ENCODE measurements at regions of chrX and their contacts with region 1.

Region 1: GRCh38 chrX:136694431-136695087 is 46.6 kb downstream of the CD40LG start:
- DNase-seq: peak; percentile 36
- ATAC-seq: peak; percentile 71
- H3K4me3 Mint-ChIP-seq: peak overlapping the region; percentile 68
- H3K27ac Mint-ChIP-seq: peak overlapping the region; percentile 98
- H3K4me1 Mint-ChIP-seq: peaks cover 75% of the 10 kb centered on the region
- H3K27me3 Mint-ChIP-seq: no peaks in the 10 kb centered on the region

Region 2: DNA sequence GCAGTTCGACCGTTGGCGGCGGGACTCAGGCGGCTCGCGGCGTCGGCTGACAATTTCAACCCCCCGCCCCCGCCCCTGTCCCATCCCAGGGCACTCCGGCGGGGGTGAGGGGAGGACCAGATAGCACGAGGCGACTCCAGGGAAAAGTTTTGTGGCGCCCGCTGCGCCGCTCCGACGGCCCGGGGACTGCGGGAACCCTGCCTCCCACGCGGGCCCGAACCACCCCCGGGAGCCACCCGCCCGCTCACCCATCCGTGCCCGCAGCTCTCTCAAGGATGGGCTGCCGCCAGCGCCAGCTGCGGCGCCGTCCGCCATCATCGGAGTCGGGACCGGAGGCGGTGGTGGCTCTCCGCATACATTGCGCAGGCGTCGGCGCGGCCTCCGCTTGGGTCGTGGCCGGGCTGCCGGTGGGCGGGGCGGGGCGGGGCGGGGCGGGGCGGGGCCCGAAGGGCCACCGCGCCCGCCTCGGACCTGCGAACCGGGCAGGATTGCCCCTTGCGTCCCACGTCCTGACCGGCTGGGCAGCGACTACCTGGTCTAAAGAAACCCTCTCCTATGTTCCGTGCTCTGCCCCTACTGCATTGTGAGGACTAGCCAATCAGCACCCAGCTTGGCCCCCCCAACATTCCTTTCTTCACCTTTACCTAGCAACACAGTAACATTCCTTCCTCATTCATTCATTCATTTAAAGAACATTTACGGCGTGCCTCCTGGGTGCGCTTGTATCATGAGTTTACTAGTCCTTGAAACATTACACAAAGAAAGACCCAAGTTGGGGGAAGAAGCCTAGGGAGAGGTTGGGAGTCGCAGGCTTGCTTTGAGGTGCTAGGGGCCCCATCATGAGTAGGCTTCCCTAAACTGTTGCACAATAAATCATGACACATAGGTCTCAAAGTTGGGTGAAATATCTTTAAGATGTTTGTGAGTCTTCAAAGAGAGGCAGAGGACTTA is 443.2 kb before region 1 on chrX and contains the start of gene MAP7D3:
- CTCF ChIA-PET with region 1: interaction called, 4 read pairs
- POLR2A ChIA-PET with region 1: no interaction called
- intact Hi-C with region 1: loop called in 1 of 2 experiments (anchors 10 kb)
- DNase-seq: peak; percentile 80
- ATAC-seq: peak; percentile 91
- H3K4me3 Mint-ChIP-seq: peak within 1 kb of the TSS; percentile 81
- H3K27ac Mint-ChIP-seq: peak within 1 kb of the TSS; percentile 80
- H3K4me1 Mint-ChIP-seq: peaks cover 8% of the 10 kb centered on the region
- H3K27me3 Mint-ChIP-seq: no peaks in the 10 kb centered on the region
- total RNA-seq, gene MAP7D3: 16.8 to 22.7 TPM

Region 3: DNA sequence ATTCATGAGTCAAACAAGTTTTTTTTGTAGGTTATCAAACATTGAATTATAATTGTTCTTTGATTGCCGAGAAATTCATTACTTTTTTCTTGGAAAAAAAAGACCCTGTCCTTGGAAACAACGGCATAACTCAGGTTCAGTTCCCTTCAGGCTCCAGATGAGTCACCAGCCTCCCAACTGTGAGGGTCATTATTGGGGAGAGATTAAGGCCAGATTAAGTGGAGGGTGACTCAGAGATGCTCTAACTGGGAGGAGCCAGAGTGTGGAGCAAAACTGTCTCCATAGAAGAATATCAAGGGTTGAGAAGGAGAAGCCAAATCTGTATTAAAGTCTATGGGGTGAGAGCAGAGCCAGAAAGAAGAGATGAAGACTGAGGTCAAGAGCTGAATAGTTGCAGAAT is 384.1 kb before region 1 on chrX:
- CTCF ChIA-PET with region 1: no interaction called
- POLR2A ChIA-PET with region 1: no interaction called
- intact Hi-C with region 1: no loop called
- DNase-seq: no peak
- ATAC-seq: no peak
- H3K4me3 Mint-ChIP-seq: no peak overlapping the region
- H3K27ac Mint-ChIP-seq: no peak overlapping the region
- H3K4me1 Mint-ChIP-seq: no peaks in the 10 kb centered on the region
- H3K27me3 Mint-ChIP-seq: peaks cover 3% of the 10 kb centered on the region

Region 4: DNA sequence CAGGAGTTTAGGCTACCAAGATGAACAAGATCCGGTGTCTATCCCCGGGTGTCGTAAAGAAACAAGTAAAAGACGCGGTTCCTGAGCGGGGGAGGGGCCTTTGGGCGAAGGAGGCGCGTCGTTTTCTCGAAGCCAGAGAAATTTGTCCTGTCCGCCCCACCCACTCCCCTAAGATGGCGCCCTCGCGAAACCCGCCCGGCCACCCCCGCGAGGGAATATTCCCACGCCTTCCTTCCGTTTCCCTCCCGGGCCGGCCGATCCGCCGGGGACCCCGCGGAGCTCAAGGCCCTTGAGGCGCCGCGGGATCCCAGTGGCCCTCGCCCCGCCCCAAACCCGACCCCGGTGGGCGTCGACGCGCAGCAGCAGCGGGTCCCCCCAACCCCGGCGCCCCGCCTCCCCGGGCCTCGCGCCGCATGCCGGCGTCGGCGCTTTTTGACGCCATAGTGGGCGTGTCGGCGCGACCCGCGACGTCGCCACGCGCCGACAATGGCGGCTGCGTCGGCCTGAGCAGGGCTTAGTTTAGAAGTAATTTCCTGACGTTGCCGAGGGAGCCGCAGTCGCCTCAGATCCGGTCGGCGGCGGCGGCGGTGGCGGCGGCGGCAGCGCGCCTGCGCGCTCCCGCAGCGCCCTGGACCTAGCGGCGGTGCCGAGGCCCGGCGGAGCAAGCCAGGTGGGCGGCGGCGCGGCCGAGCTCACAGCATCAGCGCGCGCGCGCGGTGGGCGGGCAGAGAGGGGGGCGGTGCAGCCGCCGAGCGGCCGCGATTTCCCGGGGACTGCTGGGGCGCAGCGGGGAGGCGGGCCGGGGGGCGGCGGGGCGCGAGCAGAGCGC is 197.6 kb before region 1 on chrX and contains the start of gene HTATSF1:
- CTCF ChIA-PET with region 1: no interaction called
- POLR2A ChIA-PET with region 1: no interaction called
- intact Hi-C with region 1: loop called (anchors 1 to 5 kb)
- DNase-seq: peak; percentile 92
- ATAC-seq: peak; percentile 76
- H3K4me3 Mint-ChIP-seq: peak within 1 kb of the TSS; percentile 83
- H3K27ac Mint-ChIP-seq: peak within 1 kb of the TSS; percentile 92
- H3K4me1 Mint-ChIP-seq: peaks cover 18% of the 10 kb centered on the region
- H3K27me3 Mint-ChIP-seq: no peaks in the 10 kb centered on the region
- total RNA-seq, gene HTATSF1: 34.8 to 42.3 TPM

Region 5: DNA sequence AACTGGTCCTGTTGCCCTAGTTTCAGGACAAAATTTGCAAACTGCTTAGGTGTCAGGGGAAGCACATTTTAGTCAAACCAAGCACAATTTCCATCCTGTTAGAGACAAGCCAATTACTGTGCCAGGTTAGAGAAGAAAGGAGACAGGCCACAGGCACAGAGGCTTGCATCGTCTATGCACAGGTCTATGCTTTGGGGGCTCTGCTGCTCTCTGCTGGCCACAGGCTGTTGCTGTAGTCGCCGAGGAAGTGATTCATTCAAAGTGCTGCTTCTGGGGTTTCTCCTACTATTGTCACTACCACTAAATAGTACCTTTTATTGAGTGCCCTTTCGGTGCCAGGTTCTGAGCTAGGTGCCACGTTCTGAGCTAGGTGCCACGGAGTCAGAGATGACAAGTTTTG is 117.0 kb before region 1 on chrX:
- CTCF ChIA-PET with region 1: interaction called, 27 read pairs
- POLR2A ChIA-PET with region 1: no interaction called
- intact Hi-C with region 1: loop called (anchors 2 kb)
- DNase-seq: peak; percentile 84
- ATAC-seq: peak; percentile 97
- H3K4me3 Mint-ChIP-seq: peak overlapping the region; percentile 15
- H3K27ac Mint-ChIP-seq: peak overlapping the region; percentile 77
- H3K4me1 Mint-ChIP-seq: peaks cover 41% of the 10 kb centered on the region
- H3K27me3 Mint-ChIP-seq: no peaks in the 10 kb centered on the region

Region 6: GRCh38 chrX:136646602-136647239 is 47.8 kb before region 1 on chrX:
- CTCF ChIA-PET with region 1: interaction called, 6 read pairs
- POLR2A ChIA-PET with region 1: no interaction called
- intact Hi-C with region 1: loop called in 1 of 2 experiments (anchors 2 kb)
- DNase-seq: peak; percentile 84
- ATAC-seq: peak; percentile 60
- H3K4me3 Mint-ChIP-seq: peak overlapping the region; percentile 96
- H3K27ac Mint-ChIP-seq: peak overlapping the region; percentile 100
- H3K4me1 Mint-ChIP-seq: peaks cover 57% of the 10 kb centered on the region
- H3K27me3 Mint-ChIP-seq: no peaks in the 10 kb centered on the region

Region 7: GRCh38 chrX:136658151-136658550 is 36.4 kb before region 1 on chrX:
- CTCF ChIA-PET with region 1: interaction called, 11 read pairs
- POLR2A ChIA-PET with region 1: interaction called, 12 read pairs
- intact Hi-C with region 1: loop called (anchors 2 kb)
- DNase-seq: peak; percentile 48
- ATAC-seq: peak; percentile 6
- H3K4me3 Mint-ChIP-seq: peak overlapping the region; percentile 96
- H3K27ac Mint-ChIP-seq: peak overlapping the region; percentile 100
- H3K4me1 Mint-ChIP-seq: peaks cover 85% of the 10 kb centered on the region
- H3K27me3 Mint-ChIP-seq: no peaks in the 10 kb centered on the region

Region 8: DNA sequence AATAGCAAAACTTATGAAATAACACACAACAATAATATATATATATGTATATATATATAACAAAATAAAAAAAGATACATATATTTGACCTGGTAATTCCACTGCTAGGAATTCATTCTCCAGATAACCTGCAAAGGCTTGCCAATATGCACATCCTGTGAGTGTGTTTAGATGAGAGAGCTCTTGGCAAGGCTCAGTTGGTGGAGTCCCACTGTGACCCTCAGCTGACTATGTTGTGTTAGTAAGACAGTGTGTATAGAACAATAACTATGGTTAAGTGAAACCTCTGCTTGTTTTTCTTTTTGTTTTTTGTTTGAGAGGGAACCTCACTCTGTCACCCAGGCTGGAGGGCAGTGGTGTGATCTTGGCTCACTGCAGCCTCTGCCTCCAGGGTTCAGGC is 225.4 kb after region 1 on chrX:
- CTCF ChIA-PET with region 1: interaction called, 3 read pairs
- POLR2A ChIA-PET with region 1: no interaction called
- intact Hi-C with region 1: loop called in 1 of 2 experiments (anchors 5 kb)
- DNase-seq: no peak
- ATAC-seq: no peak
- H3K4me3 Mint-ChIP-seq: no peak overlapping the region
- H3K27ac Mint-ChIP-seq: no peak overlapping the region
- H3K4me1 Mint-ChIP-seq: peaks cover 2% of the 10 kb centered on the region
- H3K27me3 Mint-ChIP-seq: no peaks in the 10 kb centered on the region

Measured in activated CD4-positive, alpha-beta T cell treated with anti-CD3 and anti-CD28 coated beads for 36 hours (primary cell).